ENCODE measurements at regions of chr5 and their contacts with region 1.

Region 1: DNA sequence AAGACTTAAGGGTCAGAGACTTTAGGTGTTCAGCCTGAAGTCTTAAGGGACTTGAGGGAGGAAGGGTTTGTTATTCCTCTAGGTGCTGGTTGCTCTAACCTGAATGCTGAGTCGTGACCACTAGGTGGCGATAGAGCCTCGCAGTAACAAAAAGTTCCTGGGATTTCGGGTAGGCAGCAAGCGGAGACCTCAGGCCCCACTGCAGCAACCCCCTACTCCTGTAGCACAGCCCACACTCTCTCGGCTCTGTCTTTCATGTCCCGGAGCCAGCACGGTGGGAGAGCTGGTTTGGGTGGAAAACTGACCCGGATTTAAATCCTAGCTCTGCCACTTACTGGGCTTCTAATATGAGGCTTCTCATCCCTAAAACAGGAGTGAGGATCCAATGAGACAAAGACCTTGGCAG is 100.3 kb upstream of the PANK3 start:
- DNase-seq: peak in 4 of 5 donors; percentile 51 to 76 (median 70)
- ATAC-seq: peak in 3 of 4 donors; percentile 13 to 53 (median 43)
- H3K4me3 ChIP-seq: no peak overlapping the region
- H3K27ac ChIP-seq: no peak overlapping the region
- H3K4me1 ChIP-seq: peaks cover 3 to 31% (median 10%) of the 10 kb centered on the region in 12 donors
- H3K27me3 ChIP-seq: no peaks in the 10 kb centered on the region
- CTCF ChIP-seq: peak; percentile 78 to 95 (median 88)
- POLR2A ChIP-seq: no peak

Region 2: DNA sequence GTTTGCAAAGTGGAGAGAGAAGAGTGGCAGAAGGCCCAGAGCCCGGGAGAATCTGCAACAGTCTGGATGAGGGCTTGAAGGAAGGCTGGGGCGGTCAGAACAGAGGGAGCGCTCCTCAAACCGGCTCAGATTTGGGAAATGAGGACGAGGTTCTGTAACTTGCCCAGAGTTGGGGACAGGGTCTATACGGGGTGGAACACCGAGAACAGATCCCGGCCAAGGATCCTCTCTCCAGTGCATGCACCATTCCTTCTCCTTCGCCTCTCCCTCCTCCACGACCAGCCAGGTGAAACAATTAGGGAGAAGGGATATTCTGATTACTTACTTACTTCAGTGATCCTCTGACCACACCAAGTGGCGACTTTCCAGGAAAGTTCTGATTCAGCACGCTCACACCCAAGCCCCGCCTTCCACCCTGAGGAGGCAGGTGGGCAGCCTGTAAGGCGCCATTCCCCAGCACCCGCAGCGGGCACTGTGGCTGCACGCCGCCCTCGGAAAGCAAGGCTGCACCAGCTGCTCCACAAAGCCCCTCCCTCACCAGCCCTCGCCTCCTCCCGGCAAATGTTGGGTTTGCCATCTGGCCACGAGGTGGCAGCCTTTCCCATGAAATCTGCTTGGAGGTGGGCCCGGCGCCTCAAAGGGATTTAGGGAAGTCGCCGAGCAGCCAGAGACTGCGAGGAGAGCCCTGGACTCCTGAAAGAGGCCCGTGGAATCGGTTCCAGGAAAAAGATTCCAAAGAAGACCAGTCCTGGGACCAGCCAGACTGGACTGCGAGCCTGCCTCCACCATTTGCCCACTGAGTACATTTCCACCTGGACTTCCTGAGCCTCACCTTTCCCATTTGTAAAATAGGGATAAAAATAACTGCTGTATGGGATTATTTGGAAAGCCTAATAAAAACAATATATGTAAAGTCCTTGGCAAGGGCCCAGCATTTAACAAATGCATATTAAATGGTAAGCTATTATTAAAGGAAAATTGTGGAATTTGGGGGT is 410.3 kb before region 1 on chr5:
- intact Hi-C with region 1: loop called in 2 of 10 experiments (anchors 10 kb)
- DNase-seq: peak; percentile 75 to 89 (median 83)
- ATAC-seq: peak; percentile 84 to 88 (median 86)
- H3K4me3 ChIP-seq: peak overlapping the region in 10 of 12 donors; percentile 26 to 50 (median 42)
- H3K27ac ChIP-seq: no peak overlapping the region
- H3K4me1 ChIP-seq: peaks cover 0 to 17% (median 13%) of the 10 kb centered on the region in 12 donors
- H3K27me3 ChIP-seq: peaks cover 0 to 6% (median 0%) of the 10 kb centered on the region in 9 donors
- CTCF ChIP-seq: peak; percentile 66 to 97 (median 86)
- POLR2A ChIP-seq: no peak

Region 3: DNA sequence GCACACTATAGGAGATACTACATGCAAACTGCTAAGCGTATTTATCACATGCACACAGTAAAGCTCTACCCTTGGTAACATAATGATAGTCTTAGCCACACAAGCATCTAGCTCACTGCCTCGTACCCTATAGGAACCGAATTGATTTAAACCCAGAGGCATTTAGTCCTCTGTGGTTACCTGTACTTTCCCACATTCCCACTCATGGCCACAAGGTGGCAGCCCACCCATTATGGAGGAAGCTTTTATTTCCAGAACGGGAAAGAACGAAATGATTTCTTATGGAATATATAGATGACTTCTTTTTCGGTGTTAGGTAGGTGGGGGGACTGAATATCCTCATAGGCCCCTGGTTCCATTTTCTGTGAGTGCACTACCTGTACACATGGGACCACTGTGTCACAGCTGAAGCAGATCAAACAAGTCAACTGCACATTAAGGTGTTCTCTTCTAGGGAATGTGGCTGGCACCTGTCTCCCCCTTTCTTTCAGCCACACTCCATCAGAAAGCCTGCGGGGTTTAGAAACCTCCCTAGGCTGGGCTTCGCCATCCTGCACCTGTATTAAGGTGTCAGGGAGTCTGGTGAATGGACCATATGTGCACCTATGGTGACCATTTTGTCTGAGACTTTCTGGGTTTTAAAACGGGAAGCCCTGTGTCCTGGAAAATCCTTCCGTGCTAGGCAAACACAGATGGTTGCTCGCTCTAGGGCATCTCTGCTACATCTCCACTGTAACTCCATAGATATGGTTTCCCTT is 308.2 kb after region 1 on chr5:
- intact Hi-C with region 1: loop called in 1 of 10 experiments (anchors 5 kb)
- DNase-seq: peak; percentile 38 to 70 (median 62)
- ATAC-seq: peak in 3 of 4 donors; percentile 48 to 59 (median 54)
- H3K4me3 ChIP-seq: no peak overlapping the region
- H3K27ac ChIP-seq: no peak overlapping the region
- H3K4me1 ChIP-seq: peaks cover 0 to 13% (median 5%) of the 10 kb centered on the region in 12 donors
- H3K27me3 ChIP-seq: peaks cover 0 to 12% (median 2%) of the 10 kb centered on the region in 9 donors
- CTCF ChIP-seq: peak; percentile 78 to 93 (median 90)
- POLR2A ChIP-seq: no peak

Region 4: DNA sequence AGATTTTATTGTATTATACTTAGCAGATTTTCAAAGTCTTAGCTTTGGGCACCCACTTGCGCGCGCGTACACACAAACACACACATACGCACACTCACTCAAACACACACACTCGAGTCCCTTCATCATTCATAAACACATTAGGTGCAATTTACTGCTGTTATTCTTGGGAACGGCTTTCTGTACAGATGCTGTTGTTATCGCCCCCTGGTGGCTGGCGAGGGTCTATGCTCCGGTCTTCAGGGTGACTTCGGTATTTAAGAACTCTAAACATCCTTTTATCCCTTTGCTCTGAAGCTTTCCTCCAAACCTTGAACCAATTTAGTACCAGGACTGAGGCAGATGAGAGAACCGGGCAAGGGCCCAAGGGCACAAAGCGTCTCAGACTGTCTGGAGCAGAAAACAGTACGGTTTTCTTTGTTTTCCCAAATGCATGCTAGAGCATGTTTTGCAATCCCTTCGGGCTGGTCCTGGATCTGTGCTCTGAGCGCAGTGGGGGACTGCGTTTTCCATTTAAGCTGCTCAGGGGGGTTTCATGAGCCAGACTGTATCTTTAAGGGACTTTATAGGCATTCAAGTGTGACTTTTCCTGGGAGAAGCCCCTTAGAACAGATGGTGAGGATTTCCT is 623.1 kb after region 1 on chr5:
- intact Hi-C with region 1: loop called in 9 of 10 experiments (anchors 1 to 10 kb)
- DNase-seq: peak; percentile 58 to 76 (median 65)
- ATAC-seq: peak in 3 of 4 donors; percentile 30 to 62 (median 53)
- H3K4me3 ChIP-seq: no peak overlapping the region
- H3K27ac ChIP-seq: no peak overlapping the region
- H3K4me1 ChIP-seq: peaks cover 0 to 34% (median 7%) of the 10 kb centered on the region in 12 donors
- H3K27me3 ChIP-seq: peaks cover 0 to 48% (median 24%) of the 10 kb centered on the region in 9 donors
- CTCF ChIP-seq: peak; percentile 77 to 92 (median 88)
- POLR2A ChIP-seq: no peak

Region 5: DNA sequence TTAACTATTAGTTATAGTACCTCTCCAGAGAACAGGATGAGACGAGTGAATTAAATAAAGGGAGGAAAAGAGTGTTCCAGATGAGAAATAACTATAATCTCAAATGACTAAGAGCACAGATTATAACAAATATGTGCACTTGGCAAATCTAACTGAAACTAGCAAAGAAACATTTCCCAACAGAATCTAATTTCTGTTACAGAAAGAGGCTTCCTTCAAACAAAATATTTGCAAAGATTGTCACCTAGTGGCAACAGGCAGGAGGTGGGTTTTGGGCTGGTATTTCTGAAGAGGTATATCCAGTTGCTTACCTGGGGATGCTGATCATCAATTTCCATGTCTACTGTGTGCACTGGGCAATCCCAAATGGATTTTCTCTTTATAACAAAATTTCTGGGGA is 898.4 kb after region 1 on chr5:
- intact Hi-C with region 1: loop called in 6 of 10 experiments (anchors 2 to 10 kb)
- DNase-seq: no peak
- ATAC-seq: peak in 1 of 4 donors; percentile 15
- H3K4me3 ChIP-seq: no peak overlapping the region
- H3K27ac ChIP-seq: no peak overlapping the region
- H3K4me1 ChIP-seq: peaks cover 0 to 8% (median 0%) of the 10 kb centered on the region in 12 donors
- H3K27me3 ChIP-seq: peaks cover 0 to 41% (median 0%) of the 10 kb centered on the region in 9 donors
- CTCF ChIP-seq: peak in 5 of 12 donors; percentile 7 to 21 (median 14)
- POLR2A ChIP-seq: no peak